GM12878 (cell line): ENCODE measurements at regions of chr11 and their contacts with region 1.

Region 1: DNA sequence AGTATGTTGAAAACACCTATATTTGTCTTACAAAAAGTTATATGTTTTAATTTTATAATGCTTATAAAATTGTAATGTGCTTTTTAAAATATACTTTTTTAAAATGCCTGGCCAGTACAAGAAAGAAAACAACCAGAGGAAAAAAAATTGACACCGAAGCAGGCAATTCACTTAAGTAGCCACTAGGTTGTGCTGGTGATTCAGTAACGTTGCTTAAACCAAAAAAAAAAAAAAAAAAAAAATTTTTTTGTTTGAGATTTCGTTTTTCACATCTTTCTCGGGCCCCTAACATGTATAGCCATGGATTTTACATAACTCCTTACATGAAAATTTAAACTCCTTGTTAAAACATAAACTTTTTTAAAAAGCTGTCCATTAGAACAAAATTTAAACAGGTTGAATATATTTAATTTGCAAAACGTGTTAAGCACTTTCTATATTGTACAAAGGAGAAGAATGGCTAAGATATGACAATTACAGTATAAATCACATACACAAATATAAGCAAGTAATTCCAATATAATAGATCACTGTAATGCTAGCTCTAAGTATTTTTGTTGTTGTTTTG is 9.2 kb downstream of the OR8B4 start:
- DNase-seq: no peak
- ATAC-seq: no peak
- H3K4me3 ChIP-seq: no peak overlapping the region
- H3K27ac ChIP-seq: no peak overlapping the region
- H3K4me1 ChIP-seq: no peaks in the 10 kb centered on the region
- H3K27me3 ChIP-seq: no peaks in the 10 kb centered on the region
- CTCF ChIP-seq: peak; percentile 54 to 70 (median 66)
- EP300 ChIP-seq: no peak
- POLR2A ChIP-seq: no peak
- RAD21 ChIP-seq: peak; percentile 76

Region 2: GRCh38 chr11:124586238-124586860 is 170.9 kb after region 1 on chr11:
- CTCF ChIA-PET with region 1: interaction called, 32 read pairs
- POLR2A ChIA-PET with region 1: no interaction called
- RAD21 ChIA-PET with region 1: interaction called, 7 read pairs
- SMC1A ChIA-PET with region 1: interaction called, 12 read pairs
- in situ Hi-C with region 1: loop called (anchors 5 kb)
- intact Hi-C with region 1: loop called (anchors 1 kb)
- DNase-seq: no peak
- ATAC-seq: peak; percentile 72
- H3K4me3 ChIP-seq: no peak overlapping the region
- H3K27ac ChIP-seq: no peak overlapping the region
- H3K4me1 ChIP-seq: no peaks in the 10 kb centered on the region
- H3K27me3 ChIP-seq: no peaks in the 10 kb centered on the region; a peak in 1 of 4 replicates
- CTCF ChIP-seq: peak; percentile 57 to 67 (median 66)
- EP300 ChIP-seq: no peak
- POLR2A ChIP-seq: no peak
- RAD21 ChIP-seq: peak; percentile 58

Region 3: GRCh38 chr11:124837491-124837856 is 422.0 kb after region 1 on chr11:
- CTCF ChIA-PET with region 1: interaction called, 5 read pairs
- POLR2A ChIA-PET with region 1: no interaction called
- RAD21 ChIA-PET with region 1: interaction called, 5 read pairs
- SMC1A ChIA-PET with region 1: no interaction called
- in situ Hi-C with region 1: loop called (anchors 25 kb)
- intact Hi-C with region 1: loop called (anchors 5 kb)
- DNase-seq: peak; percentile 2
- ATAC-seq: peak; percentile 67
- H3K4me3 ChIP-seq: no peak overlapping the region
- H3K27ac ChIP-seq: no peak overlapping the region
- H3K4me1 ChIP-seq: no peaks in the 10 kb centered on the region
- H3K27me3 ChIP-seq: peaks cover 16 to 17% of the 10 kb centered on the region in 2 experiments
- CTCF ChIP-seq: peak; percentile 41 to 60 (median 54)
- EP300 ChIP-seq: no peak
- POLR2A ChIP-seq: no peak
- RAD21 ChIP-seq: peak; percentile 46